Right ventricle myocardium inferior (tissue), 1 donor: ENCODE measurements at regions of chr12 and their contacts with region 1.

Region 1: GRCh38 chr12:46546634-46547286 is 174.2 kb upstream of the SLC38A2 start:
- DNase-seq: no peak
- ATAC-seq: no peak

Region 2: GRCh38 chr12:46530375-46531056 is 16.2 kb before region 1 on chr12:
- intact Hi-C with region 1: loop called (anchors 2 kb)
- DNase-seq: peak; percentile 54
- ATAC-seq: peak; percentile 26